Motor neuron (in vitro differentiated cells): ENCODE measurements at regions of chr2 and their contacts with region 1.

Region 1: GRCh38 chr2:118855451-118856279 is 8.2 kb upstream of the EN1 start:
- ATAC-seq: peak; percentile 90 to 96 (median 92)
- H3K4me3 ChIP-seq: peak overlapping the region; percentile 26 to 41 (median 32)
- H3K27ac ChIP-seq: no peak overlapping the region
- H3K4me1 ChIP-seq: no peaks in the 10 kb centered on the region

Region 2: DNA sequence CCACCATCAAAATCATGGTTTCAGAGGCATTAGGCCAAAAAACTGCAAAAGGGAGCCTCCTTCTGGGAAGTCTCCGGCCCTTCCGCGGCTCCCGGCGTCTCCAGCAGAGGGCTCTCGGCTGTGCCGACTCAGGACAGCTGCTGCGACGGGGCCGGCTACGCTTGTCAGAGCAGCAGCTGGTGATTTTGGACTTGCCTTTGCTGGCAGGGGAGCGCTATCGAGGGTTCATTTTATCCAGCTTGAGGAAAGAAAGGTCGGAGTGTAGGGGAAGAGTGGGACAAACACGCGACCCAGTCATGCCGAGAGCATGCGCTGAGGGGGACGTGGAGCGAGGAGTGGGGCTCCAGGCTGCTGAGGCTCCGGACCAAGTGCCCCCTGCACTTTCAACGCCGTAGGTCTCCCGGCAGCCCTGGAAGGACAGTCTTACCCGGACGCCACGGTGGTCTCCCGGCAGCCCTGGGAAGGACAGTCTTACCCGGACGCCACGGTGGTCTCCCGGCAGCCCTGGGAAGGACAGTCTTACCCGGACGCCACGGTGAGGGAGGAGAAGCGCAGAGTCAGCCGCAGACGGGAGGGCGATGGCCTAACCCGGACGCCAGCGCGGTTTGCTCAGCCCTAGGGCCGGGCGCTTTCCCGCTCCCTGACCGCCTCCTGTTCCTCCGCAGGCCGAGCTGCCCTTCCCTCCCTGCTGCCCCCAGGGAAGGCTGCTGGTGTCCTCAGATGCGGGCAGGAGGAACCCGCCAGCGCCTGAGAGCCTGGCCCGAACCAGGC is 1019.5 kb before region 1 on chr2:
- in situ Hi-C with region 1: loop called in 1 of 9 experiments (anchors 25 kb)
- ATAC-seq: peak; percentile 88 to 97 (median 91)
- H3K4me3 ChIP-seq: peak overlapping the region; percentile 19 to 31 (median 21)
- H3K27ac ChIP-seq: peak overlapping the region in 1 of 2 donors; percentile 3
- H3K4me1 ChIP-seq: no peaks in the 10 kb centered on the region

Region 3: DNA sequence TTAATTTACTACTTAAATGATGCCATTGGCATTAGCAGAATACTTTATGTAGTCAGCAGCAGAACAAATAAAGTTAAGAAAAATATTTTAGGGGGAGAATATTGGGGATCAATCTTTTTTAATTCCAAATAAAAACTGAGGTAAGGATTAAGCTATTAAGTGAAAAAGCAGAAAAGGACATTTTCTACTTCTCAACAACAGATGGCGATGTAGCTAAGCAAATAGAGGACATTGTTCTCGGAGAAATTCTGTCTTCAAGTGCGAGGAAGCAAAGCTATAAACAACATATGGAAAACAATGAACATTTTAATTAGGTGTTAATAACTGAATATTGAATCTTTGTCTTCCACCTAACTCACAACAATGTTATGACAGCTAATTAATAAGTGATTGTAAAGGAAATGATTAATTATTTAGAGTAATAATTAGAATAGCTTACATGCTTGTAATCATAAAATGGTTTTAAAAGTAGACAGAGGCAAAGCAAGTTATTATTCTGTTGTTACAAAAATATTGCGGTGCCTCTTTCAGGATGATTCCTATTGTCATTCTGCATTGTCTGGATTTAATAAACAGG is 808.9 kb before region 1 on chr2:
- in situ Hi-C with region 1: loop called (anchors 10 to 25 kb)
- ATAC-seq: peak in 1 of 8 experiments; percentile 22
- H3K4me3 ChIP-seq: no peak overlapping the region
- H3K27ac ChIP-seq: no peak overlapping the region
- H3K4me1 ChIP-seq: peaks cover 24 to 30% of the 10 kb centered on the region in 2 donors

Region 4: DNA sequence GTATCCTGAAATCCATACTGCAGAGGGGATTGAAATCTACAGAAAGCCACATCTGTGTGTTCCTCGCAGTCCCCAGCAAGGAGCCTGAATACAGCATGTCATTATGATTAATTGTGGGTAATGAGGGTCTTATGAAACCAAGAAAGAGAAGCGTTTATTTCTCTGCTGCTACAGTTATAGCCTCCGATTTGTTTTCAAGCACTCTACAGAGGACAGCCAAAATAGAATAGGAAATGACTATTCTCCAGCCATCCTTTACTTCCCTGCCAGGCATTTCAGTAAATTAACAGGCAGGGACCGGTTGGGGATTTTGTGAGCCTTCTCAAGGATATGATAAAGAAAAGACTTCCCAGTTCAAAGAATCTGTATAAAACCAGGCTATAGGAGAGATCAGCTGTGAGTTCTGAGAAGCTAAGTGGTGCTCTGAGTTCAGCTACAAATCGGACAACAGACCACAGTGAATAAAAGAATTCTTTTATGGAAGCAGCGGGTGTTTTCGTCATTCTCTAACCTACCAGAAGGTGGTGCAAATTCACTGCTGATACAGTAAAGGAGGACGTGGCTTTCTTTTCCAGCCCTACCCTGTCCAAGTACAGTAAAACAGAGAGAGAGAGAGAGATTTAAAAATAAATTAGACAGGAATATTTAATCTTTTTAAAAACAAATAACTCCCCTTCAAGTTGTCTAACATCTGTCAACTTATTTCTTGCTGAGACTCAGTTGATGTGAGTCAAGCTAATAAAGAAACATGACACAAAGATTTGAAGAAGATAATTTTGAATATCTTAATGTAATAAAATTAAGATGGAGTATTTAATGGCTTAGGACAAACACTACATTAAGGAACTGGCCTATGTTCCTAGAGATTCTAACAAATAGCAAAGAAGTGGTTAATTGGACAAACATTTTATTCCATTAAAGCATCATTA is 633.7 kb before region 1 on chr2:
- in situ Hi-C with region 1: loop called in 7 of 9 experiments (anchors 5 to 25 kb)
- ATAC-seq: peak; percentile 77 to 90 (median 84)
- H3K4me3 ChIP-seq: no peak overlapping the region
- H3K27ac ChIP-seq: peak overlapping the region in 1 of 2 donors; percentile 5
- H3K4me1 ChIP-seq: peaks cover 25 to 34% of the 10 kb centered on the region in 2 donors

Region 5: GRCh38 chr2:118554616-118555015 is 301.0 kb before region 1 on chr2:
- in situ Hi-C with region 1: loop called in 1 of 9 experiments (anchors 25 kb)
- ATAC-seq: peak in 1 of 8 experiments; percentile 58
- H3K4me3 ChIP-seq: no peak overlapping the region
- H3K27ac ChIP-seq: no peak overlapping the region
- H3K4me1 ChIP-seq: peaks cover 5 to 6% of the 10 kb centered on the region in 2 donors